Ovary (tissue), 10 donors: ENCODE measurements at regions of chr13 and their contacts with region 1.

Region 1: DNA sequence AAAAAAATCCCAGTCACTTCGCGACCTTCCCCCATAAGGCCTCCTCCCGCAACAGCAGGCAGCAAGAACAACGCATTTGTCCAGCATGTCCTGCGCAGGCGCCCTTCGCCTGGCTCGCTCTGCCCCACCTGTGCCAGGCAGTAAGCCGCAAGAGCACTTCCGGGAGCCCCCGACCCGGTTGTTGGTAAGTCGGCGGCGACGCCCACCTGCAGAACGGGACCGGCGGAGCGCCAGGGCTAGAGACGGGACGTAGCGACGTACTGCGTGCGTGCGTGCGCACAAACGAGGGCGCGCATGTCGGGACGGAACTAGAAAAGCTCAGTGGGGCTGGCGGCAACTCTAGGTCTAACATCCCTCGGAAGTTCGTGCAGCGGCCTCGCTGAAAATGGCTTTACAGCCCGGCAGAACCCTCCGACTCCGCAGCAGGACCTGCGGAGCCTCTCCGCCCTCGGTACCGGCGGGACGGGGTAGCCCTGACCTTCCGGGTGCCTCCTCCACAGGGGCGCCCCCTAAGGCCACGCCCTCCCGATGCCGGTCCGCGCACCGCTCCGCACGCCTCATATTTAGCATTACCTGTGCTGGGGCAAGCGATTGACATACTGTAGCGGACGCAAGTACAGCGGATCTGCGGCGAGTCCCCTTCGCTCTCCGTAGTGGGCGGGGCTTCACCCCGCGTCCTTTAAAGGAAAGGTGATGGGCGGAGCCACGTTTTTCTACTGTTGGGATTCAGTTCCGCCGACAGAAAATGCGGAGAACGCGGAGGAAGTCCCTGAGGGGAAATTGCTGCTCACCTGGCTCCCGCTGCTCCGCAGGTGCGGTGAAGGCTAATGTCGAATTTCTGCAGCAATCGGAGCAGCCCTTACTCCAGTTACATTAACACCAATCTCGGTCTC is at the start of gene MTIF3:
- DNase-seq: peak; percentile 94 to 96 (median 96)
- H3K4me3 ChIP-seq: peak within 1 kb of the TSS; percentile 82
- H3K27ac ChIP-seq: peak within 1 kb of the TSS; percentile 93 to 98
- H3K4me1 ChIP-seq: peaks cover 8% of the 10 kb centered on the region
- H3K27me3 ChIP-seq: no peaks in the 10 kb centered on the region
- CTCF ChIP-seq: peak in 1 of 3 donors; percentile 23
- EP300 ChIP-seq: no peak
- POLR2A ChIP-seq: peak; percentile 72
- total RNA-seq, gene MTIF3: 33.7 to 61.1 (median 34.9) TPM

Region 2: DNA sequence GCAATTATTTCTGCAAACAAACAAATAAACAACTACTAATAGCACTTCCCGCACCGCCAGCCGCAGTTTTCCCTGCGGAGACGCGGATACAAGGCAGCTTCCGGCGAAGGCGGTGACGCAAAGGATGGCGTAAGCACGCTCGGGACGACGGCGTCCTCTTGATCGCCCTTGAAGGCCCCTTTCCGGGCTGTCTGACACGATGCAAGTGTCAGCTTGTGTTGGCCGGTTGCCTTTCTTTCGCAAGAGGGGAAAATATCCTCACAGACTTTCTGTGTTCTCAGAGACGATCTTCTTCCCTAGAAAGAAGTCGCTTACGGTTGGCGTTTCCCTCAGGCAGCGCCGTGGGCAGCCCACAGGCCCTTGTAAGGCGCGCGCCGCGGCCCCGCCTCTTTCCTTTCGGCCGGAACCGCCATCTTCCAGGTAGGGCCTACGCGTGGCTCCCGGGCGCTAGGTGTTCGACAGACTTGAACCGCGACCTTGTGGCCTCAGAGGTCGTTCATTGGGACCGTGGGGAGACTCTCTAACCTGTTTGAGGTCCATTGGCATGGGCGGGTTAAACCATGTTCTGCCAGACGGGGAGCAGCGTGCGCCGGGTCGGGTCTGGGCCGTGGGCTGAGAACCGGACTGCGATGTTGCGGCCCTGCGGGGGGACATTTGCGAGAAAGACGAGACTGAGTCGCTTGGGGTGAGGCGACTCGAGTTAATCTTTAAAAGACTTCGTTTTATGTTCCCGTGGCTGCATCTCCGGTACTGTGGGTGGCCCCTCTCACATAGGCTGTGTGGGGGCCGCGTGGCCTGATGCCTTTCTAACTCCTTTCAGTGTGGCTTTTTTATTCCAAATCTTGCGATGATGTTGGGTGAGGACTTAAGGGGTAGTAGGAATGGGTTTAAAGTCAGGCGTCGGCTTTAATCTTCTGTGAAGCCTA is 198.8 kb before region 1 on chr13 and contains the start of gene RPL21:
- intact Hi-C with region 1: loop called in 1 of 4 experiments (anchors 10 kb)
- DNase-seq: peak; percentile 94 to 97 (median 96)
- H3K4me3 ChIP-seq: peak within 1 kb of the TSS; percentile 86
- H3K27ac ChIP-seq: peak within 1 kb of the TSS; percentile 91 to 96
- H3K4me1 ChIP-seq: peaks cover 7% of the 10 kb centered on the region
- H3K27me3 ChIP-seq: no peaks in the 10 kb centered on the region
- CTCF ChIP-seq: no peak
- EP300 ChIP-seq: peak; percentile 85
- POLR2A ChIP-seq: peak; percentile 75
- total RNA-seq, gene RPL21: 1,871 to 3,304 (median 2,161) TPM

Region 3: GRCh38 chr13:27424246-27425157 is 25.7 kb before region 1 on chr13 and contains the start of gene GTF3A:
- intact Hi-C with region 1: loop called in 2 of 4 experiments (anchors 1 to 2 kb)
- DNase-seq: peak; percentile 81 to 92 (median 87)
- H3K4me3 ChIP-seq: peak within 1 kb of the TSS; percentile 76
- H3K27ac ChIP-seq: peak within 1 kb of the TSS; percentile 33 to 83
- H3K4me1 ChIP-seq: peaks cover 10% of the 10 kb centered on the region
- H3K27me3 ChIP-seq: no peaks in the 10 kb centered on the region
- CTCF ChIP-seq: no peak
- EP300 ChIP-seq: no peak
- POLR2A ChIP-seq: peak; percentile 64
- total RNA-seq, gene GTF3A: 41.0 to 70.0 (median 46.9) TPM

Region 4: DNA sequence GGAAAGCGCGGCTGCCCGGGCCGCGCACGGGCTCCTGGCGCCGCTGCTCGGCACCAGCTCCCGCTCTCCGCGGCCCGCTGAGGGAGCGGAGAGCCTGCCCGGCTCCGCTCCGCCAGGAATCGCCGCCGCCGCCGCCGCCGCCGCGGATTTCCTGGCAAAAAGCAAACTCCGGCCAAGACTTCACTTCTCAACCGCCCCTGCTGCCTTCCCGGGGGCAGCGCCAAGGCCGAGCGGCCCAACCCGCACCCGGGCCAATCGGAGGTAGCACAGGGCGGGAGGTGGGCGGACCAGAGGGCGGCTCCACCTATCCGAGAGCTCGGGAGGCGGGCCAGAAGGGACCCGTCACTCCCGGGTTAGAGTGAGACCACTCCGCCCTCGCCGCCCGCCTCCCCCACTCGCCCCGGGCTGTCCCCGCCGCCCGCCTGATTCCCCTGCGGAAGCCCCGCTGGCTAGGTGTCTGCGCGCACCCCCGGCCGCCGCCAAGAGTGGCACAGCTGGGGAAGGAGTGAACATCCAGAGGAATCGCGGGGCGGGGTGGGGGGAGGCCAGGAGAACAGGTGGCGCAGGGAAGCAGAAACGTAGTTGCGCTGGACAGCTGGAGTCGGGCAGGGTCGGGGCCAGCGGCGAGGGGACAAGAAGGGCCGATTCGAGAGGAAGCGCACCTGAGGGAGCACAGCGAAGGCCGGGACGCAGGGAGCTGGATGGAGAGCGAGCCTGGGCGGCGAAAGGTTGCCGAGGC is 170.4 kb after region 1 on chr13 and contains the start of gene LNX2:
- intact Hi-C with region 1: loop called in 1 of 4 experiments (anchors 10 kb)
- DNase-seq: peak; percentile 99
- H3K4me3 ChIP-seq: peak within 1 kb of the TSS; percentile 72
- H3K27ac ChIP-seq: peak within 1 kb of the TSS; percentile 94 to 96
- H3K4me1 ChIP-seq: peaks cover 8% of the 10 kb centered on the region
- H3K27me3 ChIP-seq: no peaks in the 10 kb centered on the region
- CTCF ChIP-seq: no peak
- EP300 ChIP-seq: no peak
- POLR2A ChIP-seq: peak; percentile 32
- total RNA-seq, gene LNX2: 6.6 to 9.8 (median 7.8) TPM

Region 5: DNA sequence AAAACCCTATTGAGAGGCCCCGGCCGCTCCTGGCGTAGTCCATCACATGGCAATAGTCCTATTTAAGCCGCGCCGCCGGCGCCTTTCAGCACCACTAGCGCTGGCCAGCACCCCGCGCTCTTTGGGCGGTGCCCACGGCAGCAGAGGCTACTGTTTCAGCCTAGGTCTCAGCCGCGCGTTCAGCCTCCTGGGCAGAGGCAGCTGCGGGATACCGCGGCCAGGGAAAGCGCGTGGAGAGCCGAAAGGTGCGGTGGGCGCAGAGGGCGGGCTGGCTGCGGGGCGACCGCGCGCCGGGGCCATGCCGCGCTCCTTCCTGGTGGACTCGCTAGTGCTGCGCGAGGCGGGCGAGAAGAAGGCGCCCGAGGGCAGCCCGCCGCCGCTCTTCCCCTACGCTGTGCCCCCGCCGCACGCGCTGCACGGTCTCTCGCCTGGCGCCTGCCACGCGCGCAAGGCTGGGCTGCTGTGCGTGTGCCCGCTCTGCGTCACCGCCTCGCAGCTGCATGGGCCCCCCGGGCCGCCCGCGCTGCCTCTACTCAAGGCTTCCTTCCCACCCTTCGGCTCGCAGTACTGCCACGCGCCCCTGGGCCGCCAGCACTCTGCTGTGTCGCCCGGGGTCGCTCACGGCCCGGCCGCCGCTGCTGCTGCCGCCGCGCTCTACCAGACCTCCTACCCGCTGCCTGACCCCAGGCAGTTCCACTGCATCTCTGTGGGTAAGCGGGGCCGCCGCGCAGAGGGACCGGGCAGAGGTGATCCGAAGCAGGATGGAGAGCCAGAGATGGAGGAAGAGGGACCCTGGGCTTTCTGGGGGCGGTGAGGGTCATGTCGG is 342.4 kb after region 1 on chr13 and contains the start of gene GSX1:
- intact Hi-C with region 1: no loop called
- DNase-seq: peak in 4 of 5 donors; percentile 13 to 70 (median 43)
- H3K4me3 ChIP-seq: peak within 1 kb of the TSS; percentile 24
- H3K27ac ChIP-seq: no peak within 1 kb of the TSS
- H3K4me1 ChIP-seq: peaks cover 5% of the 10 kb centered on the region
- H3K27me3 ChIP-seq: peaks cover 5% of the 10 kb centered on the region
- CTCF ChIP-seq: no peak
- EP300 ChIP-seq: no peak
- POLR2A ChIP-seq: no peak
- total RNA-seq, gene GSX1: not detected